BJ (cell line): ENCODE measurements at regions of chr5 and their contacts with region 1.

Region 1: GRCh38 chr5:169980418-169981053 is at the start of gene INSYN2B:
- DNase-seq: peak; percentile 63
- H3K4me3 ChIP-seq: peak within 1 kb of the TSS; percentile 43
- H3K27me3 ChIP-seq: no peaks in the 10 kb centered on the region
- CTCF ChIP-seq: peak; percentile 59
- polyA plus RNA-seq, gene INSYN2B: 2.0 and 2.4 TPM in 2 replicates

Region 2: DNA sequence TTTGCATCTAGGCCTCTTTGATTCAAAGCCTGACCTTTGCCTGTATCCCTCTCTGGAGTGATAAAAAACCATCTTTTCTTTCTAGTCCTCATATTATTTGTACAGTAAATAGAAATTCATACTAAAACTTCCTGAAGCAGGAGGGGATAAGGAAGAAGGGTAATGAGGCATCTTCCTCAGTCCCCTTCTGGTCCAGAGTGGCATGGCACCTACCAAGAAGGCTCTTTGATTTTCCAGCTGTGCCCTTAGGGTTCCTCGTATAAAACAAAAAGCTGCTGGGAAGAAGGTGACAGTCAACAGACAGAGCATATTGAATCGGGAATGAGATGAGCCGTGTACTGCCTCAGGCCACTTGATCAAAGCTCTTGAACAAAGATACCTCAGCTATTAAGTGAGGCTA is 468.8 kb before region 1 on chr5:
- CTCF ChIA-PET with region 1: no interaction called
- POLR2A ChIA-PET with region 1: no interaction called
- DNase-seq: no peak
- H3K4me3 ChIP-seq: no peak overlapping the region
- H3K27me3 ChIP-seq: no peaks in the 10 kb centered on the region; the same call in 1 of the 2 replicates
- CTCF ChIP-seq: 0 out of 2 replicates have a peak, but pooled peaks have one; percentile 12

Region 3: DNA sequence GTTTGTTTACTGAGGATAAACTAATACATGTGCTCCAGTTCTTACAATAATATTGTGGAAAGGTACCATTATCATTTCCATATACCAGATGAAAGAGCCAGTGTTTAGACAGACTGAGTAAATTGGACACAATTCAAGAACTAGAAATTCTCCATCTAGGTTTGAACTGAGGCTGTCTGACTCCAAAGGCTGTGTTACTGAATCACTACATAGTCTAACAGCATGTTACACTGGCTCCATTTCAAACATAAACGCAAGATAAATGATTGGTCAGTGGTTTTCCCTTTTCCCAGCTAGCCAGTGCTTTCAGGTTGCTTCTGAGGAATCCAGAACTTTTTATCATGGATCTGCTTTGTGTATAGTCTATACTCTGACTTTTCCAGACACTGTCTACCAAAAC is 388.9 kb before region 1 on chr5:
- CTCF ChIA-PET with region 1: interaction called, 11 read pairs
- POLR2A ChIA-PET with region 1: no interaction called
- DNase-seq: no peak
- H3K4me3 ChIP-seq: no peak overlapping the region
- H3K27me3 ChIP-seq: no peaks in the 10 kb centered on the region
- CTCF ChIP-seq: no peak

Region 4: GRCh38 chr5:169706758-169707691 is 273.5 kb before region 1 on chr5:
- CTCF ChIA-PET with region 1: interaction called, 38 read pairs
- POLR2A ChIA-PET with region 1: no interaction called
- DNase-seq: peak; percentile 32
- H3K4me3 ChIP-seq: no peak overlapping the region
- H3K27me3 ChIP-seq: no peaks in the 10 kb centered on the region
- CTCF ChIP-seq: no peak

Region 5: GRCh38 chr5:169742771-169743296 is 237.7 kb before region 1 on chr5:
- CTCF ChIA-PET with region 1: interaction called, 11 read pairs
- POLR2A ChIA-PET with region 1: no interaction called
- DNase-seq: peak; percentile 79
- H3K4me3 ChIP-seq: no peak overlapping the region
- H3K27me3 ChIP-seq: no peaks in the 10 kb centered on the region
- CTCF ChIP-seq: no peak

Region 6: GRCh38 chr5:169826618-169827017 is 153.9 kb before region 1 on chr5:
- CTCF ChIA-PET with region 1: interaction called, 12 read pairs
- POLR2A ChIA-PET with region 1: no interaction called
- DNase-seq: no peak
- H3K4me3 ChIP-seq: no peak overlapping the region
- H3K27me3 ChIP-seq: no peaks in the 10 kb centered on the region
- CTCF ChIP-seq: peak; percentile 33; the same call in 1 of the 2 replicates

Region 7: DNA sequence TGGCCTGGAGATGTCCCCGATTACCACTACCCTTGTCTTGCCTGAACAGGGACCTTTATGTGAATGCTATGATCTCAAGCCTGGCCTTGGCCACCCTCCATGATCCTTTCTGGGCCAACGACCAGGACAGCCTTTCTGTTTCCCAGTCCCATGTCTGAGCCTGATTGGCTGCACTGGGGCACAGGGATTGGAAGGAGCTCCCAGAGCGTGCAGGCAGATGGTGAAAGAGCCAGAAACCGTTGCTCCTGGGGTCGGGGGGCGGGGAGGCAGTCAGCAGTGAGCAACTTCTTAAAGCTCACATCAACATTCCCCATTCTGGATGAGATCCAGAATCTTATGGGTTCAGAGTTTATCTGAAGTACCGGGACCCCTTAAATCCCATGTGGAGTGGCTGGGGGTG is 84.6 kb before region 1 on chr5:
- CTCF ChIA-PET with region 1: interaction called, 11 read pairs
- POLR2A ChIA-PET with region 1: no interaction called
- DNase-seq: no peak
- H3K4me3 ChIP-seq: no peak overlapping the region
- H3K27me3 ChIP-seq: no peaks in the 10 kb centered on the region
- CTCF ChIP-seq: no peak

Region 8: GRCh38 chr5:169945831-169946261 is 34.7 kb before region 1 on chr5:
- CTCF ChIA-PET with region 1: interaction called, 30 read pairs
- POLR2A ChIA-PET with region 1: no interaction called
- DNase-seq: no peak
- H3K4me3 ChIP-seq: no peak overlapping the region
- H3K27me3 ChIP-seq: no peaks in the 10 kb centered on the region
- CTCF ChIP-seq: no peak

Region 9: DNA sequence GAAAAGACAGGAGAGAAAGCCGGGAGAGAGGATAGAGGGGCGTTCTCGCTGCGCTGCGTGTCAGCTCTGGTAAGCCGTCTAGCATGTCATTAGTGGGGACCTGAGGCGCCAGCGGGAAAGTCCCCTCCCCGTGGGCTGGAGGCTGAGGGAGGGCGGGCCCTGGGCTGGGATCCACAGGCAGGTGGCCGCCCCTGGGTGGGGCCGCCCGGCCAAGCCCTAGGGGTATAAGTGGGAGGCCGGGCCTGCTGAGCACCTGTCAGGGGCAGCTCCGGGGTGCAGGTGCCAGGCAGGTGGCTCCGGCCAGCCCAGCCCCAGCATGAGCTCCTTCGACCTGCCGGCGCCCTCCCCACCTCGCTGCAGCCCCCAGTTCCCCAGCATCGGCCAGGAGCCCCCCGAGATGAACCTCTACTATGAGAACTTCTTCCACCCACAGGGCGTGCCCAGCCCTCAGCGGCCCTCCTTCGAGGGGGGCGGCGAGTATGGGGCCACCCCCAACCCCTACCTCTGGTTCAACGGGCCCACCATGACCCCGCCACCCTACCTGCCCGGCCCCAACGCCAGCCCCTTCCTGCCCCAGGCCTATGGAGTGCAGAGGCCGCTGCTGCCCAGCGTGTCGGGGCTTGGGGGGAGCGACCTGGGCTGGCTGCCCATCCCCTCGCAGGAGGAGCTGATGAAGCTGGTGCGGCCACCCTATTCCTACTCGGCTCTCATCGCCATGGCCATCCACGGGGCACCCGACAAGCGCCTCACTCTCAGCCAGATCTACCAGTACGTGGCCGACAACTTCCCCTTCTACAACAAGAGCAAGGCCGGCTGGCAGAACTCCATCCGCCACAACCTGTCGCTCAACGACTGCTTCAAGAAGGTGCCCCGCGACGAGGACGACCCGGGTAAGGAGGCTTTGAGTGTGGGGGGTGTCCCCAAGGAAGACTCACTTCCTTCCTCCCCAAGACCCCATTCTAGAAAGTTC is 125.4 kb after region 1 on chr5 and contains the start of gene FOXI1:
- CTCF ChIA-PET with region 1: no interaction called
- POLR2A ChIA-PET with region 1: no interaction called
- DNase-seq: no peak
- H3K4me3 ChIP-seq: no peak within 1 kb of the TSS
- H3K27me3 ChIP-seq: no peaks in the 10 kb centered on the region
- CTCF ChIP-seq: no peak
- polyA plus RNA-seq, gene FOXI1: not detected in 2 replicates